ENCODE measurements at regions of chr5 and their contacts with region 1.

Region 1: DNA sequence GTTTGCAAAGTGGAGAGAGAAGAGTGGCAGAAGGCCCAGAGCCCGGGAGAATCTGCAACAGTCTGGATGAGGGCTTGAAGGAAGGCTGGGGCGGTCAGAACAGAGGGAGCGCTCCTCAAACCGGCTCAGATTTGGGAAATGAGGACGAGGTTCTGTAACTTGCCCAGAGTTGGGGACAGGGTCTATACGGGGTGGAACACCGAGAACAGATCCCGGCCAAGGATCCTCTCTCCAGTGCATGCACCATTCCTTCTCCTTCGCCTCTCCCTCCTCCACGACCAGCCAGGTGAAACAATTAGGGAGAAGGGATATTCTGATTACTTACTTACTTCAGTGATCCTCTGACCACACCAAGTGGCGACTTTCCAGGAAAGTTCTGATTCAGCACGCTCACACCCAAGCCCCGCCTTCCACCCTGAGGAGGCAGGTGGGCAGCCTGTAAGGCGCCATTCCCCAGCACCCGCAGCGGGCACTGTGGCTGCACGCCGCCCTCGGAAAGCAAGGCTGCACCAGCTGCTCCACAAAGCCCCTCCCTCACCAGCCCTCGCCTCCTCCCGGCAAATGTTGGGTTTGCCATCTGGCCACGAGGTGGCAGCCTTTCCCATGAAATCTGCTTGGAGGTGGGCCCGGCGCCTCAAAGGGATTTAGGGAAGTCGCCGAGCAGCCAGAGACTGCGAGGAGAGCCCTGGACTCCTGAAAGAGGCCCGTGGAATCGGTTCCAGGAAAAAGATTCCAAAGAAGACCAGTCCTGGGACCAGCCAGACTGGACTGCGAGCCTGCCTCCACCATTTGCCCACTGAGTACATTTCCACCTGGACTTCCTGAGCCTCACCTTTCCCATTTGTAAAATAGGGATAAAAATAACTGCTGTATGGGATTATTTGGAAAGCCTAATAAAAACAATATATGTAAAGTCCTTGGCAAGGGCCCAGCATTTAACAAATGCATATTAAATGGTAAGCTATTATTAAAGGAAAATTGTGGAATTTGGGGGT is 22.2 kb upstream of the WWC1 start:
- DNase-seq: peak; percentile 92 to 96
- H3K4me3 ChIP-seq: peak overlapping the region; percentile 43
- H3K4me3 Mint-ChIP-seq: peak overlapping the region; percentile 83
- H3K27ac Mint-ChIP-seq: peak overlapping the region; percentile 86
- H3K4me1 ChIP-seq: peaks cover 23% of the 10 kb centered on the region
- H3K4me1 Mint-ChIP-seq: peaks cover 31% of the 10 kb centered on the region
- H3K27me3 ChIP-seq: no peaks in the 10 kb centered on the region
- H3K27me3 Mint-ChIP-seq: no peaks in the 10 kb centered on the region
- CTCF ChIP-seq: peak; percentile 85 to 88

Region 2: GRCh38 chr5:168135897-168136296 is 133.3 kb before region 1 on chr5:
- CTCF ChIA-PET with region 1: no interaction called
- POLR2A ChIA-PET with region 1: no interaction called
- intact Hi-C with region 1: no loop called
- DNase-seq: no peak
- H3K4me3 ChIP-seq: no peak overlapping the region
- H3K4me3 Mint-ChIP-seq: no peak overlapping the region
- H3K27ac Mint-ChIP-seq: no peak overlapping the region
- H3K4me1 ChIP-seq: 0 out of 2 replicates have a peak, but pooled peaks cover 7% of the 10 kb centered on the region
- H3K4me1 Mint-ChIP-seq: peaks cover 11% of the 10 kb centered on the region
- H3K27me3 ChIP-seq: no peaks in the 10 kb centered on the region; the same call in 1 of the 2 replicates
- H3K27me3 Mint-ChIP-seq: peaks cover 11% of the 10 kb centered on the region
- CTCF ChIP-seq: no peak

Region 3: GRCh38 chr5:168209244-168209995 is 59.8 kb before region 1 on chr5:
- CTCF ChIA-PET with region 1: no interaction called
- POLR2A ChIA-PET with region 1: no interaction called
- intact Hi-C with region 1: no loop called
- DNase-seq: no peak
- H3K4me3 ChIP-seq: no peak overlapping the region
- H3K4me3 Mint-ChIP-seq: no peak overlapping the region
- H3K27ac Mint-ChIP-seq: no peak overlapping the region
- H3K4me1 ChIP-seq: no peaks in the 10 kb centered on the region
- H3K4me1 Mint-ChIP-seq: no peaks in the 10 kb centered on the region
- H3K27me3 ChIP-seq: peaks cover 1% of the 10 kb centered on the region
- H3K27me3 Mint-ChIP-seq: peaks cover 34% of the 10 kb centered on the region
- CTCF ChIP-seq: no peak

Region 4: DNA sequence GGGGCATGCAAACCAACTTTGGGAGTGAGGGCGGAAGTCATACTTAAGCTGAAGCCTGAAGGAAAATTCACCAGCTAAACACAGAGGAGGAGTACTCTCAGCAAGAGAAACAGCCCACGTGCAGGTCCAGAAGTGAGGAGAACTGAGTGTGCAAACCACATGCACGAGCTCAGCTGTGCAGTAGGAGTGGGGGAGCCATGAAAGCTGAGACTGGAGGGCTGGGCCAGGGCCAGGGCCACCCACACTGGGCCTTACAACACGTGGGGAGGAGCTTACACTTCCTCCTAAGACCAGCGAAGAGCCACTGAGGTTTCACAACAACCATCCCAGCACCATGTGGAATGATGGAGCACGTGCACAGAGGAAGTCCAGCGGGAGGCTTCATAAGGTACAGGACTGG is 12.9 kb after region 1 on chr5:
- CTCF ChIA-PET with region 1: interaction called, 16 read pairs
- POLR2A ChIA-PET with region 1: interaction called, 4 read pairs
- intact Hi-C with region 1: no loop called
- DNase-seq: peak; percentile 57 to 62
- H3K4me3 ChIP-seq: no peak overlapping the region
- H3K4me3 Mint-ChIP-seq: no peak overlapping the region
- H3K27ac Mint-ChIP-seq: peak overlapping the region; percentile 21
- H3K4me1 ChIP-seq: peaks cover 34% of the 10 kb centered on the region
- H3K4me1 Mint-ChIP-seq: peaks cover 36% of the 10 kb centered on the region
- H3K27me3 ChIP-seq: no peaks in the 10 kb centered on the region
- H3K27me3 Mint-ChIP-seq: no peaks in the 10 kb centered on the region
- CTCF ChIP-seq: no peak

Region 5: DNA sequence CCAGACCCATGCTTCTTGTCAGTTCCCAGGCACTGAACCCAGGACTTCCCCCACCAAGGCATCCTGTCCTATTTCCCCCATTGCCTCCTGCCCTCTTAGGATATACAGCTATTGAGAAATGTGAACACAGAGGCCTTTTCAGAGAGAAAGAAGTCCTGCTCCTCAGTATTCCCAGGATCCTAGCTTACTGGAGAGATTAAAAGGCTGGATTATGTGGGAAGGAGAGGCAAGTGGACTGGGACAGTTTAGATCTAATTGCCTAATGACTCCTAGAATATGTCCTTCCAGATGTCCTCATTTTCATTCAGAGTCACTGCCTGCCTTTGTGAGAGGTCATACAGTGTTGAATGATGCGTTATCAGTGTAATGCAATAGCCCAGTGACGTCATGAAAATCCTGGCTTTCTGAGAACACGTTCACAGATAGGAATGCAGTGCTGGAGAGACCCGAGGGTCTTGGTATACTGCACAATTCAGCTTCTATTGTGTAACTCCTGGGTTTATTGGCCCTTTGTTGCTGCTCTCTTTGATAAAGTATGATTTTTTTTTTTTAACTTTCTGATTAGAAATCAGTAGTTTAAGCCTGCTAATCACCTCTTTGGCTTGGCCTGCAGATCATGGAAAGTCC is 48.4 kb after region 1 on chr5:
- CTCF ChIA-PET with region 1: interaction called, 4 read pairs
- POLR2A ChIA-PET with region 1: interaction called, 3 read pairs
- intact Hi-C with region 1: loop called (anchors 1 kb)
- DNase-seq: peak; percentile 90 to 95
- H3K4me3 ChIP-seq: no peak overlapping the region
- H3K4me3 Mint-ChIP-seq: peak overlapping the region; percentile 35
- H3K27ac Mint-ChIP-seq: peak overlapping the region; percentile 98
- H3K4me1 ChIP-seq: peaks cover 83% of the 10 kb centered on the region
- H3K4me1 Mint-ChIP-seq: peaks cover 48% of the 10 kb centered on the region
- H3K27me3 ChIP-seq: no peaks in the 10 kb centered on the region
- H3K27me3 Mint-ChIP-seq: no peaks in the 10 kb centered on the region
- CTCF ChIP-seq: no peak

Region 6: GRCh38 chr5:168346441-168346840 is 77.2 kb after region 1 on chr5:
- CTCF ChIA-PET with region 1: interaction called, 3 read pairs
- POLR2A ChIA-PET with region 1: no interaction called
- intact Hi-C with region 1: loop called (anchors 1 kb)
- DNase-seq: peak; percentile 79 to 80
- H3K4me3 ChIP-seq: no peak overlapping the region
- H3K4me3 Mint-ChIP-seq: peak overlapping the region; percentile 71
- H3K27ac Mint-ChIP-seq: peak overlapping the region; percentile 92
- H3K4me1 ChIP-seq: peaks cover 81% of the 10 kb centered on the region
- H3K4me1 Mint-ChIP-seq: peaks cover 74% of the 10 kb centered on the region
- H3K27me3 ChIP-seq: no peaks in the 10 kb centered on the region
- H3K27me3 Mint-ChIP-seq: no peaks in the 10 kb centered on the region
- CTCF ChIP-seq: no peak

Region 7: GRCh38 chr5:168365581-168366081 is 96.4 kb after region 1 on chr5:
- CTCF ChIA-PET with region 1: interaction called, 13 read pairs
- POLR2A ChIA-PET with region 1: interaction called, 7 read pairs
- intact Hi-C with region 1: loop called (anchors 1 kb)
- DNase-seq: peak; percentile 86 to 90
- H3K4me3 ChIP-seq: no peak overlapping the region
- H3K4me3 Mint-ChIP-seq: peak overlapping the region; percentile 63
- H3K27ac Mint-ChIP-seq: peak overlapping the region; percentile 97
- H3K4me1 ChIP-seq: peaks cover 61% of the 10 kb centered on the region
- H3K4me1 Mint-ChIP-seq: peaks cover 55% of the 10 kb centered on the region
- H3K27me3 ChIP-seq: no peaks in the 10 kb centered on the region
- H3K27me3 Mint-ChIP-seq: no peaks in the 10 kb centered on the region
- CTCF ChIP-seq: peak; percentile 46 to 84

Region 8: GRCh38 chr5:168434001-168434400 is 164.8 kb after region 1 on chr5:
- CTCF ChIA-PET with region 1: interaction called, 5 read pairs
- POLR2A ChIA-PET with region 1: no interaction called
- intact Hi-C with region 1: loop called (anchors 1 kb)
- DNase-seq: no peak
- H3K4me3 ChIP-seq: no peak overlapping the region
- H3K4me3 Mint-ChIP-seq: no peak overlapping the region
- H3K27ac Mint-ChIP-seq: no peak overlapping the region
- H3K4me1 ChIP-seq: peaks cover 5% of the 10 kb centered on the region; the same call in 1 of the 2 replicates
- H3K4me1 Mint-ChIP-seq: peaks cover 19% of the 10 kb centered on the region
- H3K27me3 ChIP-seq: no peaks in the 10 kb centered on the region
- H3K27me3 Mint-ChIP-seq: no peaks in the 10 kb centered on the region
- CTCF ChIP-seq: no peak

Region 9: GRCh38 chr5:168552146-168552545 is 282.9 kb after region 1 on chr5:
- CTCF ChIA-PET with region 1: no interaction called
- POLR2A ChIA-PET with region 1: no interaction called
- intact Hi-C with region 1: no loop called
- DNase-seq: no peak
- H3K4me3 ChIP-seq: no peak overlapping the region
- H3K4me3 Mint-ChIP-seq: no peak overlapping the region
- H3K27ac Mint-ChIP-seq: no peak overlapping the region
- H3K4me1 ChIP-seq: no peaks in the 10 kb centered on the region
- H3K4me1 Mint-ChIP-seq: no peaks in the 10 kb centered on the region
- H3K27me3 ChIP-seq: no peaks in the 10 kb centered on the region
- H3K27me3 Mint-ChIP-seq: no peaks in the 10 kb centered on the region
- CTCF ChIP-seq: no peak

Region 10: DNA sequence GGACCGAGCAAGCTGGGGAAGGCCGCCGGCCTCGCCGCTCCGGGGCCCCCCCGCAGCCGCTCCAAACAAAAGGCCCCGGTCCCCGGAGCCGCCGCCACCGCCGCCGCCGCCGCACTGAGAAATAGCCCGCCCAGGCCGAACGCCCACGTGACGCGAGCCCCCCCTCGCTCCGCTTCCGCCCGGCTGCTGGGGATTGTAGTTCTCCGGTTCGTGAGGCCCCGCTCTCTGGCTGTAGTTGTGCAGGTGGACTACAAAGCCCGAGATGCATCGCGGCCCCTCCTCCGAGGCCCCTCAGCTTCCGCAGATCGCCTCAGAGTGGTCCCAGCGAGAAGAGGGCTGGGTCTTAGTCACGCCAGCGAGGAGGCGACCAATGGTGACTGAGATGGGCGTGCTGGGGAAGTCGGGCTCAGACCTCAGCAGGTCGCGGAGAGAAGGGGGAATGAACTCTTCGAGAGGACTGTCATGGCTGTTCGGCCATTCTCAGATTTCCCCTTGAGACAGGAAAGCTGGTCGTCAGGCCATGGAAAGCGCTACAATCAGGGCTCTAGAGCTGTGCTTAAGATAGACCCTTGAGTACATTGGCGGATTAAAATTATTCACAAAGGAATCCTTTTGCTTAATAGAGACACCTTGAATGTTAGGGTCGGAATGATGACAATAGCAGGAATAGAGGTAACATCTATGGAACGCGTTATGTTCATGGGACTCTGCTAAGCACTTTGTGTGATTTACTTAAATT is 310.4 kb after region 1 on chr5:
- CTCF ChIA-PET with region 1: no interaction called
- POLR2A ChIA-PET with region 1: no interaction called
- intact Hi-C with region 1: loop called (anchors 10 kb)
- DNase-seq: peak; percentile 98 to 99
- H3K4me3 ChIP-seq: peak overlapping the region; percentile 99
- H3K4me3 Mint-ChIP-seq: peak overlapping the region; percentile 92
- H3K27ac Mint-ChIP-seq: peak overlapping the region; percentile 95
- H3K4me1 ChIP-seq: 0 out of 2 replicates have a peak, but pooled peaks cover 4% of the 10 kb centered on the region
- H3K4me1 Mint-ChIP-seq: peaks cover 20% of the 10 kb centered on the region
- H3K27me3 ChIP-seq: no peaks in the 10 kb centered on the region
- H3K27me3 Mint-ChIP-seq: no peaks in the 10 kb centered on the region
- CTCF ChIP-seq: no peak

Measured in Caco-2 (cell line).